ENCODE measurements at regions of chr1 and their contacts with region 1.

Region 1: GRCh38 chr1:62368989-62369388 is 49.8 kb upstream of the KANK4 start:
- H3K4me3 Mint-ChIP-seq: no peak overlapping the region
- H3K27ac Mint-ChIP-seq: no peak overlapping the region
- H3K4me1 Mint-ChIP-seq: no peaks in the 10 kb centered on the region
- H3K27me3 Mint-ChIP-seq: peaks cover 7% of the 10 kb centered on the region

Region 2: DNA sequence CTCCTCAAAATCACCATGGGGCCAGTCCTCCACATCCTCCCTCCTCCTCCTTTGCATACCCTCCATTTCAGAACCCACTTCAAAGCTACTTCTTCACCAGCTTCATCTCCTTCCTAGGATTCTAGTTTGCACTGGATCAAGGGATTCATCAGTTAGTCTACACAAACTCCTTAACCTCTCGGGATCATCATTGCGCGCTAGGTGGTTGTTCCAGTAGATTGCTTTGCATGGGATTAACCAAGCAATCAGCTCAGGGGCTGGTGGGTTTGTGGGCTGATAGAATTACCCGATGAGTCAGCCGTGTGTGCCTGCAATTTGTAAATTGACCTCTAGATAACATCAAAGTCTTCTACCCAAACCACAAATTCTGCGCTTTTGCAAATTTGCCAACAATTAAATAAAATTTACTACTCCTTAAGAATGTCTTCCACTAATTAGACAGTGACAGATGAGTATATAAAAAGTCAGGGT is 57.5 kb before region 1 on chr1:
- intact Hi-C with region 1: no loop called
- H3K4me3 Mint-ChIP-seq: no peak overlapping the region
- H3K27ac Mint-ChIP-seq: no peak overlapping the region
- H3K4me1 Mint-ChIP-seq: no peaks in the 10 kb centered on the region
- H3K27me3 Mint-ChIP-seq: peaks cover 1% of the 10 kb centered on the region

Region 3: DNA sequence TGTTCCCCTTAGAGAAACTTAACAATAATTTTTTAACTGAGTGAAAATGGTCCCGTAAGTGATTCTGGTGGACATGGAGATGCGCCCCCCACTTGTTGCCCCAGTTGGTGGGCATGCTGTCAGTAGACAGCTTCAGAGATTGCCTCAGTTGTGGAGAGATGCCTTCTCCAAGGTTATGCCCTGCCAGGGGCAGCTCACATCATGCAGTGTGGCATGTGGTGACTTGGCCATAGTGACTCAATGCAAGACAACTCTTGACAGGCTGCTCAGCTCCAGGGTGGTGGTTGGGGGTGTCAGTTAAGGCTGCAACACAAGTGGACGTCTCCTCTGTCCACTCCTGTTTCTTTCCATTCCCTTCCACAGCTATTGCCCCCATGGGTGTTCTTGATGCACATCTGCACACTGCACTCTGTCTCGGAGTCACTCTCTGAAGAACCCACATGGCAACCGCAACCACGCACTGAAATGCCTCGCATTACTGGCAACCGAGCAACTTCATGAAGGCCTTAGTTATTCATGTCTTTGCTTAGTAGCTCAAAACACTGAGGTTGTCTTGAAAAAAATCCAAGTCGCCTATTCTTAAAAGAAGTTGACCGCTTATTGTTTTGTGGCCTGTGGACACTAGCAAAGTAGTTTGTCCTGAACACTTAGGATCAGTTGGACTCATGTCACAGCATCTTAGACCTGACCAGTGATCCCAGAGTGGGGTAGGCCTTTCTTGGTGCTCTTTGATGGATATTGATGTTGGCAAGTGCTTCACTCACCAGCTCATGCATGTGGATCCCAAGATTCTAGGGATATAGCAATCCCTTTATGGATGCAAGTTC is 13.1 kb after region 1 on chr1:
- intact Hi-C with region 1: loop called (anchors 1 kb)
- H3K4me3 Mint-ChIP-seq: no peak overlapping the region
- H3K27ac Mint-ChIP-seq: no peak overlapping the region
- H3K4me1 Mint-ChIP-seq: no peaks in the 10 kb centered on the region
- H3K27me3 Mint-ChIP-seq: no peaks in the 10 kb centered on the region